Caco-2 (cell line): ENCODE measurements at regions of chr15 and their contacts with region 1.

Region 1: DNA sequence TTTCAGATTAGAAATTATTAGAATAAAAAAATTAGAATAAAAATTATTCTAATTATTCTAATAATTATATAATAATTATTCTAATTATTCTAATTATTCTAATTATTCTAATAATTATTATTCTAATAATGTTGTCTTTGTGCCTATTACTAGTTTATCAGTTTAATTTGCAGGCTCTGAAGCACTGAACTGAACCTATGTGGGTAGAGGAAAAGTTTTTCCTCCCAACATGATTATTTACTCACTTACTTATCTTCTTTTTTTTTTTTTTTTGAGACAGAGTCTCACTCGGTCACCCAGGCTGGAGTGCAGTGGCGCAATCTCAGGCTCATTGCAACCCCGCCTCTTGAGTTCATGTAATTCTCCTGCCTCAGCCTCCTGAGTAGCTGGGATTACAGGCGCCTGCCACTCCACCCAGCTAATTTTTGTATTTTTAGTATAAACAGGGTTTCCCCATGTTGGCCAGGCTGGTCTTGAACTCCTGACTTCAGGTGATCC is 39.7 kb upstream of the C15orf39 start:
- DNase-seq: peak; percentile 75 to 79
- H3K4me3 ChIP-seq: no peak overlapping the region
- H3K4me3 Mint-ChIP-seq: peak overlapping the region; percentile 44
- H3K27ac Mint-ChIP-seq: peak overlapping the region; percentile 64
- H3K4me1 ChIP-seq: peaks cover 42% of the 10 kb centered on the region
- H3K4me1 Mint-ChIP-seq: no peaks in the 10 kb centered on the region
- H3K27me3 ChIP-seq: no peaks in the 10 kb centered on the region
- H3K27me3 Mint-ChIP-seq: no peaks in the 10 kb centered on the region
- CTCF ChIP-seq: no peak

Region 2: DNA sequence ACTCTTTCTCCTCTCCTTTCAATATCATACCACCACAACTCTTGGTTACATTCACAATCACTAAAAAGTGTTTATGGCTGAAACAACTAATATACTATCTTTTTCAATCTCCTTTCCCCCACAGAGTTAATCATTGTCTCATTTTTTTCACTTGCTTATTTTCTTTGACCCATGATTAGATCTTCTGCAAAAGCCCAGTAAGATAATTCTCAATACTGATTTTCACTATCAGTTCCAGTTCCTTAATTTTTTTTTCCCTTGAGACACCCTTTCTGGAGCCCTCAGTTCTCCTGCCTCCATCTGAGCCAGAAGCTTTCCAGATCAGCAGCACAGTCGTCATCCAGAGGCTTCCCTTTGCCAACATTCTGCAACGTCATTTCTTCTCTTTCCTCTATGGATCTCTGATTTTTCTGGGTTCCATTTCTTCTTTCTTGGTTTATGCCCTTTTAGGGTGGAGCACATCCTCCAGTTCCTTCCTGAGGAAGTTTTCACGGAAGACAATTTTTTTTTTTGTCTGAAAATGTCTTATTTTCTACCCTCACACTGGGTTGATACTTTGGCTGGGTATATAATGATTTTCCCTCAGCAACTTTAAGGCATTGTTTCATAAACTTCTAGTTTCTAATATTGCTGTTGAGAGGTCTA is 49.0 kb before region 1 on chr15:
- CTCF ChIA-PET with region 1: no interaction called
- POLR2A ChIA-PET with region 1: no interaction called
- intact Hi-C with region 1: loop called (anchors 1 kb)
- DNase-seq: no peak
- H3K4me3 ChIP-seq: no peak overlapping the region
- H3K4me3 Mint-ChIP-seq: no peak overlapping the region
- H3K27ac Mint-ChIP-seq: peak overlapping the region; percentile 82
- H3K4me1 ChIP-seq: peaks cover 10% of the 10 kb centered on the region; the same call in 1 of the 2 replicates
- H3K4me1 Mint-ChIP-seq: peaks cover 11% of the 10 kb centered on the region
- H3K27me3 ChIP-seq: no peaks in the 10 kb centered on the region
- H3K27me3 Mint-ChIP-seq: no peaks in the 10 kb centered on the region
- CTCF ChIP-seq: no peak

Region 3: GRCh38 chr15:75138016-75138999 is 23.7 kb before region 1 on chr15:
- CTCF ChIA-PET with region 1: no interaction called
- POLR2A ChIA-PET with region 1: no interaction called
- intact Hi-C with region 1: loop called (anchors 1 kb)
- DNase-seq: peak; percentile 40 to 67
- H3K4me3 ChIP-seq: no peak overlapping the region
- H3K4me3 Mint-ChIP-seq: no peak overlapping the region
- H3K27ac Mint-ChIP-seq: peak overlapping the region; percentile 92
- H3K4me1 ChIP-seq: peaks cover 43% of the 10 kb centered on the region
- H3K4me1 Mint-ChIP-seq: peaks cover 30% of the 10 kb centered on the region
- H3K27me3 ChIP-seq: no peaks in the 10 kb centered on the region
- H3K27me3 Mint-ChIP-seq: no peaks in the 10 kb centered on the region
- CTCF ChIP-seq: no peak

Region 4: DNA sequence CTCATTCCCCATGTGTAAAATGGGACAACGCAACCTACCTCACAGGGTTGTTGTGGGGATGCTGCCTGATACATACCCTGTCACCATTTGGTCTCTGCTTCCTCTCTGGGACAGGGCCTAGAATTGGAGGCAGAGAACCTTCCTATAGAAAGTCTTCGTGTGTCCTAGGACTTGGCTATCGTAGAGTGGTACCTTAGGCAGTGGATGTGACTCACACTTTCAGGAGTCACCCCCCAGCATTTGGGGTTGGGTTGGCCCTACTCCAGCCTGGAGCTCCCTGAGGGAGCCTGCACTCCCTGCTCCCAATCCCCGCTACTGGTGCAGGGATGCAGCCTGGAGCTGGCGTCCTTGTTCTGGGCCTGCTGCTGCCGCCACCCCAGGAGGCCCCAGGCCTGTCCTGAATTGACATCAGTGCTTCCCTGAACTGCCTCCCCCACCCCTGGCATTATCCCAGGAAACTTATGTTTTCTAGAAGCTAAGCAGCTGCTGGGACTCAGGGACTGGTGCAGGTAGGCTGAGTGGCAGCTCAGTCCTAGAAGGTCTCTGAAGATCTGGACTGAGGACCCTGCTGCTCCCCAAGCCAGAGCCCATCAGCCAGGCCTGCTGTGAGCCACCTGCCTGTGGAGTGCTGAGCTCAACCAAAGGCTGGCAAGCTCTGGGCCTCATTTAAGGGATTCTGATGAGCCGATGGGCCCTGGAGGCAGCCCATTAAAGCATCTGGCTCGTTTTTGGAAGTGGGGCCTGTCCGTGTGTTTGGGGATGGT is 49.7 kb after region 1 on chr15:
- CTCF ChIA-PET with region 1: no interaction called
- POLR2A ChIA-PET with region 1: no interaction called
- intact Hi-C with region 1: no loop called
- DNase-seq: no peak
- H3K4me3 ChIP-seq: no peak overlapping the region
- H3K4me3 Mint-ChIP-seq: no peak overlapping the region
- H3K27ac Mint-ChIP-seq: no peak overlapping the region
- H3K4me1 ChIP-seq: no peaks in the 10 kb centered on the region
- H3K4me1 Mint-ChIP-seq: no peaks in the 10 kb centered on the region
- H3K27me3 ChIP-seq: no peaks in the 10 kb centered on the region
- H3K27me3 Mint-ChIP-seq: no peaks in the 10 kb centered on the region
- CTCF ChIP-seq: no peak